Activated B cell treated with CpG ODN at 0.5 μM for 24 hours (primary cell): ENCODE measurements at regions of chr2 and their contacts with region 1.

Region 1: DNA sequence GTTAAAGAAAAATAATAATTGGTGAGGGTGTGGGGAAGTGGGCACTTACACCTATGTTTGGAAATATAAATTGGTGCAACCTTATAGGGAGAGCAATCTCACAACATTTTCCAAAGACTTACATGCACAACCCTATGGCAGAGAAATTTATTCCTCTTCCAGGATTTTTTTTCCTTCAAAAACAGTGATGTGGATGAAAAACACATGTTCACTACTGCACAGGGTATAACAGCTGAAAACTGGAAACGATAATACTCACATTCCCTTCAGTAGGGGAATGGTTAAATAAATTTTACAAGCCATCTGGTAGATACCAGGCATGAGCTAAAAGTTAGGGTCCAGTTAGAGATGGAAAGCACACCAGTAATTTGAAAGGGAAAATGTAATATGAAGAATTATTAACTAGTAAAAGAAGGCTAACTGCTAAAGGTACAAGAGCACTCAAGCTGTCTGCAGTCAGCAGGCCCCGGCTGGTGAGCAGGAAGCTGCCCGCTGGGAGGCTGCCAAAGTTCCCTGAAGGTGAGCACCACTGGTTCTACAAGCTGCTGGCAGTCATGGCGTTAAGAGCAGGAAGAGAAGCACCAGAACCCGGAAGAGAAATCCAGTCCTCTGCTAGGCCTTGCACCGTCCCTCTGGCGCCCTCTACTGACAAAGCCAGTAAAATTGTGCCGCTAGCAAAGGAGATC is 28.4 kb upstream of the CASP8 start:
- DNase-seq: peak; percentile 69
- ATAC-seq: peak; percentile 62
- H3K4me3 Mint-ChIP-seq: peak overlapping the region; percentile 55
- H3K27ac Mint-ChIP-seq: peak overlapping the region; percentile 93
- H3K4me1 Mint-ChIP-seq: peaks cover 56% of the 10 kb centered on the region
- H3K27me3 Mint-ChIP-seq: no peaks in the 10 kb centered on the region
- CTCF ChIP-seq: peak; percentile 32

Region 2: GRCh38 chr2:200811336-200812121 is 420.4 kb before region 1 on chr2 and contains the start of gene BZW1:
- CTCF ChIA-PET with region 1: no interaction called
- POLR2A ChIA-PET with region 1: no interaction called
- intact Hi-C with region 1: loop called (anchors 5 kb)
- DNase-seq: peak; percentile 94
- ATAC-seq: peak; percentile 80
- H3K4me3 Mint-ChIP-seq: peak within 1 kb of the TSS; percentile 98
- H3K27ac Mint-ChIP-seq: peak within 1 kb of the TSS; percentile 99
- H3K4me1 Mint-ChIP-seq: peaks cover 34% of the 10 kb centered on the region
- H3K27me3 Mint-ChIP-seq: no peaks in the 10 kb centered on the region
- CTCF ChIP-seq: no peak
- total RNA-seq, gene BZW1: 174 and 197 TPM in 2 replicates

Region 3: GRCh38 chr2:200963124-200963917 is 268.6 kb before region 1 on chr2 and contains the start of gene ORC2:
- CTCF ChIA-PET with region 1: interaction called, 17 read pairs
- POLR2A ChIA-PET with region 1: interaction called, 7 read pairs
- intact Hi-C with region 1: loop called (anchors 1 kb)
- DNase-seq: peak; percentile 94
- ATAC-seq: peak; percentile 93
- H3K4me3 Mint-ChIP-seq: peak within 1 kb of the TSS; percentile 97
- H3K27ac Mint-ChIP-seq: peak within 1 kb of the TSS; percentile 97
- H3K4me1 Mint-ChIP-seq: peaks cover 63% of the 10 kb centered on the region
- H3K27me3 Mint-ChIP-seq: no peaks in the 10 kb centered on the region
- CTCF ChIP-seq: no peak
- total RNA-seq, gene ORC2: 36.8 and 38.1 TPM in 2 replicates

Region 4: DNA sequence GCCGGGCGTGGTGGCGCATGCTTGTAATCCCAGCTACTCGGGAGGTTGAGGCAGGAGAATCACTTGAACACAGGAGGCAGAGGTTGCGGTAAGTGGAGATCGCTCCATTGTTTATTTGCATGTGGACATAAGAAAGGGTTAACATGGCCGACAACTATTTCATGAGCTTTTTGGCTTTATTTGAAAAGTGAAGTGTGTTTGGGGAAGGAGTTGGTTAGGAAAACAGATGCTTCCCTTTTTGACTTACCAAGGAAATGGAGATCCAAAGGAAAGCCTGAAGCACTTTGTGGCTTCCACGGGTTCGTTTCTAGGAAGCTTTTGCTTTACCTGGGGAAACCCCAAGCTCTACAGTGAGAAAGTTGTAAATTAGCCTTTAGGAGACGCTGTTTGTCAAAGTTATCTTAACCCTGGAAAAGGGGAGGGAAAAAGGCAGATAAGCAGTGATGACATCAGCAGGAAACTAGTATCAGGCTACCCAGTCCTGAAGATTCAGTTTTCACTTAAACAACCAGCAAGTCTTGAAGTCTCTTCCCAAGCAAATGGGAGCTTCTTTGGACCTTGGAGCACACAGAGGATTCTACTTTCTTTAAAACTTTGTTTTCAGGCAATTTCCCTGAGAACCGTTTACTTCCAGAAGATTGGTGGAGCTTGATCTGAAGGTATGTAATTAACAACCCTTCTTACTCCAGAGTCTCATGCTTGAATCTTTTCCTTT is 49.1 kb before region 1 on chr2 and contains the start of gene CASP10:
- CTCF ChIA-PET with region 1: interaction called, 147 read pairs
- POLR2A ChIA-PET with region 1: interaction called, 73 read pairs
- intact Hi-C with region 1: loop called (anchors 1 kb)
- DNase-seq: no peak
- ATAC-seq: peak; percentile 77
- H3K4me3 Mint-ChIP-seq: peak within 1 kb of the TSS; percentile 92
- H3K27ac Mint-ChIP-seq: peak within 1 kb of the TSS; percentile 83
- H3K4me1 Mint-ChIP-seq: peaks cover 48% of the 10 kb centered on the region
- H3K27me3 Mint-ChIP-seq: no peaks in the 10 kb centered on the region
- CTCF ChIP-seq: no peak
- total RNA-seq, gene CASP10: 9.5 and 13.8 TPM in 2 replicates

Region 5: GRCh38 chr2:201257956-201258665 is 26.2 kb after region 1 on chr2:
- CTCF ChIA-PET with region 1: interaction called, 57 read pairs
- POLR2A ChIA-PET with region 1: interaction called, 57 read pairs
- intact Hi-C with region 1: loop called (anchors 1 kb)
- DNase-seq: peak; percentile 68
- ATAC-seq: peak; percentile 61
- H3K4me3 Mint-ChIP-seq: peak overlapping the region; percentile 90
- H3K27ac Mint-ChIP-seq: peak overlapping the region; percentile 98
- H3K4me1 Mint-ChIP-seq: peaks cover 83% of the 10 kb centered on the region
- H3K27me3 Mint-ChIP-seq: no peaks in the 10 kb centered on the region
- CTCF ChIP-seq: no peak

Region 6: GRCh38 chr2:201572846-201573508 is 341.1 kb after region 1 on chr2:
- CTCF ChIA-PET with region 1: no interaction called
- POLR2A ChIA-PET with region 1: no interaction called
- intact Hi-C with region 1: loop called (anchors 10 kb)
- DNase-seq: no peak
- ATAC-seq: peak; percentile 71
- H3K4me3 Mint-ChIP-seq: peak overlapping the region; percentile 52
- H3K27ac Mint-ChIP-seq: peak overlapping the region; percentile 78
- H3K4me1 Mint-ChIP-seq: peaks cover 39% of the 10 kb centered on the region
- H3K27me3 Mint-ChIP-seq: peaks cover 2% of the 10 kb centered on the region
- CTCF ChIP-seq: no peak

Region 7: GRCh38 chr2:202033321-202034248 is 801.7 kb after region 1 on chr2 and contains the start of gene FZD7:
- CTCF ChIA-PET with region 1: no interaction called
- POLR2A ChIA-PET with region 1: no interaction called
- intact Hi-C with region 1: loop called (anchors 10 kb)
- DNase-seq: peak; percentile 79
- ATAC-seq: peak; percentile 87
- H3K4me3 Mint-ChIP-seq: peak within 1 kb of the TSS; percentile 86
- H3K27ac Mint-ChIP-seq: peak within 1 kb of the TSS; percentile 14
- H3K4me1 Mint-ChIP-seq: peaks cover 12% of the 10 kb centered on the region
- H3K27me3 Mint-ChIP-seq: peaks cover 17% of the 10 kb centered on the region
- CTCF ChIP-seq: no peak
- total RNA-seq, gene FZD7: 0.33 and 0.37 TPM in 2 replicates